SK-N-SH (cell line): ENCODE measurements at regions of chr6 and their contacts with region 1.

Region 1: GRCh38 chr6:17584241-17584803 is 15.8 kb upstream of the FAM8A1 start:
- DNase-seq: peak; percentile 69
- H3K4me3 ChIP-seq: peak overlapping the region; percentile 7 to 21; a peak in 2 of 4 replicates
- H3K27ac ChIP-seq: peak overlapping the region in 1 of 2 experiments; percentile 20; a peak in 1 of 4 replicates
- H3K4me1 ChIP-seq: no peaks in the 10 kb centered on the region
- H3K27me3 ChIP-seq: no peaks in the 10 kb centered on the region
- CTCF ChIP-seq: peak; percentile 96
- EP300 ChIP-seq: no peak
- RAD21 ChIP-seq: peak; percentile 82

Region 2: GRCh38 chr6:17149571-17149970 is 434.8 kb before region 1 on chr6:
- CTCF ChIA-PET with region 1: interaction called, 21 read pairs
- POLR2A ChIA-PET with region 1: no interaction called
- DNase-seq: no peak
- H3K4me3 ChIP-seq: no peak overlapping the region
- H3K27ac ChIP-seq: no peak overlapping the region
- H3K4me1 ChIP-seq: no peaks in the 10 kb centered on the region
- H3K27me3 ChIP-seq: no peaks in the 10 kb centered on the region
- CTCF ChIP-seq: no peak
- EP300 ChIP-seq: no peak
- RAD21 ChIP-seq: no peak

Region 3: GRCh38 chr6:17156112-17156921 is 428.0 kb before region 1 on chr6:
- CTCF ChIA-PET with region 1: interaction called, 51 read pairs
- POLR2A ChIA-PET with region 1: interaction called, 3 read pairs
- DNase-seq: peak; percentile 63
- H3K4me3 ChIP-seq: no peak overlapping the region
- H3K27ac ChIP-seq: no peak overlapping the region
- H3K4me1 ChIP-seq: no peaks in the 10 kb centered on the region
- H3K27me3 ChIP-seq: no peaks in the 10 kb centered on the region
- CTCF ChIP-seq: peak; percentile 86
- EP300 ChIP-seq: no peak
- RAD21 ChIP-seq: peak; percentile 97

Region 4: GRCh38 chr6:17599885-17600526 is 15.7 kb after region 1 on chr6 and contains the start of gene FAM8A1:
- CTCF ChIA-PET with region 1: interaction called, 15 read pairs
- POLR2A ChIA-PET with region 1: no interaction called
- DNase-seq: peak; percentile 96
- H3K4me3 ChIP-seq: peak within 1 kb of the TSS; percentile 91 to 92
- H3K27ac ChIP-seq: peak within 1 kb of the TSS; percentile 66 to 76; a peak in 3 of 4 replicates
- H3K4me1 ChIP-seq: peaks cover 7 to 9% of the 10 kb centered on the region in 2 experiments; a peak in 3 of 4 replicates
- H3K27me3 ChIP-seq: no peaks in the 10 kb centered on the region
- CTCF ChIP-seq: peak; percentile 43
- EP300 ChIP-seq: peak in 1 of 2 experiments; percentile 32; a peak in 2 of 4 replicates
- RAD21 ChIP-seq: no peak
- polyA plus RNA-seq, gene FAM8A1: 5.0 and 6.8 TPM in 2 replicates

Region 5: DNA sequence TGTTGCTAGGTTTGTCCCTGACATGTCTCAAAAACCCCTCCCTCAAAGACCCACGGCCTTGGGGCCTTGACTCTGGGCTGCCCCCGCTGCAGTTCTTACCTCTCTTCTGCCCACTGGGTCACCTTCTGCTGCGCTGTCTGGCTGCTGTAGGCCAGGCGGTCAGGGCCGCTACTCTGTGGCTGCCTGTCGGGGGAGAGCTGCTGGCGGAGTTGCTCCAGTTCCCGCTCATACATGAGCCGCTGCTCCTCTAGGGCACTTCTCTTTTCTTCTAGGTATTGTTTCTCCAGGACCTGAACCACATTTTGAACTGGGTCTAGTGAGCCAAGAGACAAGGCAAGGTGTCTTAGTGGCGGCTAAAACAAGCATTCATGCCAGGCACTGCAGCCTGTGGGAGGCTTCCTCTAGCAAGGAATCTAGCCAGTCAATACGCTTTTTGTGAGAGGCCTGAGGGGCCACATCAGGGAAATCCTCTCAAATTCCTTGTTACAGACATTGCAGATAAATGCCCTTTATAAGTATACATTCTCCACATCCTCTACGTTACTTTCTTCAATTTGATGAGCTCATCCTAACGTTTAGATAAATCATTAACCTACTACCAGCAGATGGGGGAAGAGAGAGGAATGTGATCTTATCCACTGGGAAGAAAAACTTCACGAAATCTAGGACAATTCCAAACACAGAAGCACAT is 232.7 kb after region 1 on chr6:
- CTCF ChIA-PET with region 1: interaction called, 33 read pairs
- POLR2A ChIA-PET with region 1: no interaction called
- DNase-seq: no peak
- H3K4me3 ChIP-seq: no peak overlapping the region
- H3K27ac ChIP-seq: 0 out of 4 replicates have a peak overlapping the region, but pooled peaks of 1 of the 2 experiments have one; percentile 19
- H3K4me1 ChIP-seq: no peaks in the 10 kb centered on the region
- H3K27me3 ChIP-seq: no peaks in the 10 kb centered on the region
- CTCF ChIP-seq: peak; percentile 49
- EP300 ChIP-seq: no peak
- RAD21 ChIP-seq: no peak